ENCODE measurements at regions of chr3 and their contacts with region 1.

Region 1: GRCh38 chr3:38039101-38039898 is at the start of gene DLEC1:
- DNase-seq: peak; percentile 92
- H3K4me3 Mint-ChIP-seq: peak within 1 kb of the TSS; percentile 48
- H3K27ac Mint-ChIP-seq: peak within 1 kb of the TSS; percentile 93
- H3K4me1 Mint-ChIP-seq: peaks cover 33% of the 10 kb centered on the region
- H3K27me3 Mint-ChIP-seq: no peaks in the 10 kb centered on the region
- total RNA-seq, gene DLEC1: 0.70 to 1.1 TPM

Region 2: GRCh38 chr3:37863939-37864822 is 175.1 kb before region 1 on chr3:
- CTCF ChIA-PET with region 1: no interaction called
- POLR2A ChIA-PET with region 1: no interaction called
- intact Hi-C with region 1: no loop called
- DNase-seq: no peak
- H3K4me3 Mint-ChIP-seq: no peak overlapping the region
- H3K27ac Mint-ChIP-seq: no peak overlapping the region
- H3K4me1 Mint-ChIP-seq: peaks cover 17% of the 10 kb centered on the region
- H3K27me3 Mint-ChIP-seq: peaks cover 14% of the 10 kb centered on the region

Region 3: DNA sequence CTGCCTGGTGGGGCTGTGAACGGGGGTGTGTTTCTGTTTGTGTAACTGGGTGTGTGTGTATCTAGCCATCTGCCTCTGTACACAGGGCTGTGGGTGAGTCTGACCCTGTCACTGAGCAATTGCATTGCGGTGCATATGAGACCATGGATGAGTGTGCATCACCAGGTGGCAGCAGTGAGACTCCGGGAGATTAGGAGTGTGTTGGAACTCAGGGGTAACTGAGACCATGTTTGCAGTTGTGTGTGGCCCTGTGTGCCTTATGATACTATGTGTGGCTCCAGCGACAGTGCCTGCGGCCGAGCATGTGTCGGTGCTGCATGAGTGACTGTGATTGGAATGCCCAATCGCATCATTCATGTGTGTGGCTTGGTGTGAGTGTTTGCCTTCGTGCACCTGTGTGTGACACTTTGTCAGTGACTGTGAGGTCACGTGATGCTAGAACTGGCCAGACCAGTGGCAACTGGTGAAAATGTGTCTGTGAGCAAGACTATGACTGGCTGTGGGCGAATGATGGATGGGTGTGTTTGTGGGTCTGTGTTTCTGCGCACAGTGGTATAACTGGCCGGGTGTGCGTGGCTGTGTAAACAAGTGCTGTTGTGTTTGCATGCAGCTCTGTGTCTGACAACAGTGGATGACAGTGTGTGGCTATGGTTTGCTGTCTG is 34.8 kb before region 1 on chr3:
- CTCF ChIA-PET with region 1: interaction called, 9 read pairs
- POLR2A ChIA-PET with region 1: no interaction called
- intact Hi-C with region 1: loop called (anchors 1 kb)
- DNase-seq: peak; percentile 72
- H3K4me3 Mint-ChIP-seq: no peak overlapping the region
- H3K27ac Mint-ChIP-seq: peak overlapping the region; percentile 54
- H3K4me1 Mint-ChIP-seq: peaks cover 17% of the 10 kb centered on the region
- H3K27me3 Mint-ChIP-seq: no peaks in the 10 kb centered on the region

Region 4: GRCh38 chr3:38054291-38055001 is 15.1 kb after region 1 on chr3:
- CTCF ChIA-PET with region 1: no interaction called
- POLR2A ChIA-PET with region 1: no interaction called
- intact Hi-C with region 1: no loop called
- DNase-seq: peak; percentile 24
- H3K4me3 Mint-ChIP-seq: no peak overlapping the region
- H3K27ac Mint-ChIP-seq: no peak overlapping the region
- H3K4me1 Mint-ChIP-seq: no peaks in the 10 kb centered on the region
- H3K27me3 Mint-ChIP-seq: no peaks in the 10 kb centered on the region